ENCODE measurements at regions of chrX and their contacts with region 1.

Region 1: DNA sequence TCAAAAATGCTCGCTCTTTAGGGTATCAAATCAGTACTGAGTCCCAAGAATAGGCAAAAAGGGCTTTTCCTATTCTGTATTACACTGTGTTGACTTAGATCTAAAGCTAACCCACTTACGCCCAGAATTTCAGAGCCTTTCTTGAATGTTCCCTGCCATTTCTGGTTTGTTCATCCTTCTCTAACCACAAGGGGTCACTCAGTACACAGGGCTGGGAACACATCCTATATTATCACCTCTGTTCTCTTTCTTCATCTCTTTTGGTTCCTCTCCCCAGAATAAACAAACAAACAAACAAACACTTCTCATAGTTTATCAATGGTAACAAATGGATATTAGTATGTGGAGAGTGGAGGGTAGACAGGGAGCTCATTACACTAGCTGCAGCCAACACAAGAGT is 25.5 kb upstream of the MORC4 start:
- DNase-seq: peak; percentile 24
- ATAC-seq: peak; percentile 56; the same call in 1 of the 2 replicates
- H3K4me3 ChIP-seq: no peak overlapping the region
- H3K27ac ChIP-seq: no peak overlapping the region
- H3K4me1 ChIP-seq: no peaks in the 10 kb centered on the region
- H3K27me3 ChIP-seq: peaks cover 3% of the 10 kb centered on the region
- CTCF ChIP-seq: peak; percentile 52
- POLR2A ChIP-seq: no peak
- RAD21 ChIP-seq: peak; percentile 63

Region 2: DNA sequence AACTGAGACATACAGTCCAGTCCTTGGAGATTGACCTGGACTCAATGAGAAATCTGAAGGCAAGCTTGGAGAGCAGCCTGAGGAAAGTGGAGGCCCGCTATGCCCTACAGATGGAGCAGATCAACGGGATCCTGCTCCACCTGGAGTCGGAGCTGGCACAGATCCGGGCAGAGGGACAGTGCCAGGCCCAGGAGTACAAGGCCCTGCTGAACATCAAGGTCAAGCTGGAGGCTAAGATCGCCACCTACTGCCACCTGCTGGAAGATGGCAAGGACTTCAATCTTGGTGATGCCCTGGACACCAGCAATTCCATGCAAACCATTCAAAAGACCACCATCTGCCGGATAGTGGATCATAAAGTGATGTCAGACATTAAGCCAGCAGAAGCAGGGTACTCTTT is 403.5 kb after region 1 on chrX:
- CTCF ChIA-PET with region 1: no interaction called
- POLR2A ChIA-PET with region 1: no interaction called
- dilution Hi-C with region 1: no loop called
- in situ Hi-C with region 1: no loop called
- intact Hi-C with region 1: loop called (anchors 5 kb)
- DNase-seq: peak; percentile 3
- ATAC-seq: no peak
- H3K4me3 ChIP-seq: no peak overlapping the region
- H3K27ac ChIP-seq: no peak overlapping the region
- H3K4me1 ChIP-seq: no peaks in the 10 kb centered on the region
- H3K27me3 ChIP-seq: peaks cover 3% of the 10 kb centered on the region
- CTCF ChIP-seq: no peak
- POLR2A ChIP-seq: no peak
- RAD21 ChIP-seq: no peak

Region 3: DNA sequence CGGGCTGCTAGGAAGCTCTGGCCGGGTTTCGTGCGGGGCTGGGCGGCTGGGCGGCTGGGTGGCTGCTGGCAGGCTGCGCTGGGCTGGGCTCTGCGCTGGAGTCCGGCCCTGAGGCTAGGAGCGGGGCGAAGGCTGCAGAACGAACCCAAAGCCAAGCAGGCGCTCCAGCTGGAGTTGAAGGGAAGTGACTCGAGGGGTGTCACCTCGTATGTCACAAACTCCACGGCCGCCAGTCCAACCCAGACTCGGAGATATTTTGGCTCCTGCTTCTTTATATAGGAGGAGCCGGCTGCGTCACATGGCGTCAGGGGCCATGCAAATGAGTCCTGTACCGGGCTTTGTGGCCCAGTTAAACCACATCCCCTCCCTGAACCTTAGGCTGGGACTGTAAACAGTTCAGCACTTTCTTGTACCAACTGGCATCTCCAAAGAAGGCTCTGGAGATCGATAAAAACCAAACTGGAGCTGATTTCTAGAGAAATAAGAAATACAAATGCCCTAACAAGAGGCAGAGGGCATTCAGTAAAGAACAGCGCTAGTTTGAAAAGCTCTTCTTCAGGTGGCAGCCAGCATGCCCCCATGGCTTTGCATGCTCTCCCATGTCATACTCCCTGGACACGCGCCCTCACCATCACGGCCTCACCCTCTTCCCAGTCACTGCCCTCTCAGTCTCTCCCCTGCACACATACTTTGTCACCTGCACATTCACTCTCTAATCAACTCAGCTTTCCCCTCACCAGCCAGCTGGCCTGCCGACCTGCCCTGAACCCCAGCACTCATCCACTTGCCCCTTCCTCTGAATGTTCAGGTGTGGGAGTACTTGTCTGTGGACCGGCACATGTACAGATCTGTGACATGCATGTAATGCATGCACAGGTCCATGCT is 691.5 kb after region 1 on chrX:
- CTCF ChIA-PET with region 1: no interaction called
- POLR2A ChIA-PET with region 1: no interaction called
- dilution Hi-C with region 1: no loop called
- in situ Hi-C with region 1: no loop called
- intact Hi-C with region 1: loop called (anchors 5 kb)
- DNase-seq: peak; percentile 63
- ATAC-seq: peak; percentile 58
- H3K4me3 ChIP-seq: peak overlapping the region; percentile 43
- H3K27ac ChIP-seq: peak overlapping the region; percentile 72
- H3K4me1 ChIP-seq: peaks cover 6% of the 10 kb centered on the region; the same call in 1 of the 2 replicates
- H3K27me3 ChIP-seq: peaks cover 16% of the 10 kb centered on the region
- CTCF ChIP-seq: no peak
- POLR2A ChIP-seq: peak; percentile 95
- RAD21 ChIP-seq: 0 out of 2 replicates have a peak, but pooled peaks have one; percentile 10

Region 4: GRCh38 chrX:107776649-107777535 is 751.3 kb after region 1 on chrX:
- CTCF ChIA-PET with region 1: no interaction called
- POLR2A ChIA-PET with region 1: no interaction called
- dilution Hi-C with region 1: no loop called
- in situ Hi-C with region 1: no loop called
- intact Hi-C with region 1: loop called (anchors 2 kb)
- DNase-seq: peak; percentile 87
- ATAC-seq: peak; percentile 88
- H3K4me3 ChIP-seq: peak overlapping the region; percentile 14; the same call in 1 of the 2 replicates
- H3K27ac ChIP-seq: no peak overlapping the region
- H3K4me1 ChIP-seq: no peaks in the 10 kb centered on the region
- H3K27me3 ChIP-seq: peaks cover 31% of the 10 kb centered on the region
- CTCF ChIP-seq: peak; percentile 80
- POLR2A ChIP-seq: no peak
- RAD21 ChIP-seq: peak; percentile 82

Region 5: DNA sequence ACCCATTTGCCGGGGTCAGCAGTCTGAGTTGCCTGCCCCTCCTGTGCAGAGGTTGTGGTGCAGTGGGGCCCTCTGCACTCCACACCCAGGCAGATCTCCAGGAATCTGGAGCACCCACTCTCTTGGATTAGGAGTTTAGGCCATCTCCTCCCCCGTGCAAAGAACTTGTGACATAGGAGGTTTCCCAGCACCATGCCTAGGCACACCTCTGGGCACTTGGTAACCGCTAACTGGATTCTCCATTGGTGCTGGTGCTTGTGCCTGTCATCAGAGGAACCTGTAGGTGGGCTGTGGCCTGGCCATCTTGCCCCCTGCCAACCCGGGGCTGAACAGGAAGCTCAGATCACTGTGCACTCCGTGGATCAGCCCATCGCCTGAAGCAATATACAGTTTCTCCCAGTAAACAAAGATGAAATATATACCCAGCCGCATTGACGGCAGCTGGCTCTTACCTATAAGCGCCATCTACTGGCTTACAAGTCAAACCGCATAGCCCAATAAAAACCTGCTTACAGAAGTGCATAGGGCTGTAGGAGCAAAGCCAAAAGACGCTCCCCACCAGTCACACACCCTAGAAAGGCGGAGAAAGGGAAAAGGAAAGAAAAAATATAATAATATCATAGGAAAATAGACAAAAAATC is 975.7 kb after region 1 on chrX:
- CTCF ChIA-PET with region 1: no interaction called
- POLR2A ChIA-PET with region 1: no interaction called
- dilution Hi-C with region 1: no loop called
- in situ Hi-C with region 1: no loop called
- intact Hi-C with region 1: loop called (anchors 10 kb)
- DNase-seq: peak; percentile 36
- ATAC-seq: peak; percentile 65
- H3K4me3 ChIP-seq: no peak overlapping the region
- H3K27ac ChIP-seq: no peak overlapping the region
- H3K4me1 ChIP-seq: no peaks in the 10 kb centered on the region
- H3K27me3 ChIP-seq: peaks cover 2% of the 10 kb centered on the region
- CTCF ChIP-seq: peak; percentile 37
- POLR2A ChIP-seq: no peak
- RAD21 ChIP-seq: no peak